Left lung (tissue), 14 donors: ENCODE measurements at regions of chr13 and their contacts with region 1.

Region 1: DNA sequence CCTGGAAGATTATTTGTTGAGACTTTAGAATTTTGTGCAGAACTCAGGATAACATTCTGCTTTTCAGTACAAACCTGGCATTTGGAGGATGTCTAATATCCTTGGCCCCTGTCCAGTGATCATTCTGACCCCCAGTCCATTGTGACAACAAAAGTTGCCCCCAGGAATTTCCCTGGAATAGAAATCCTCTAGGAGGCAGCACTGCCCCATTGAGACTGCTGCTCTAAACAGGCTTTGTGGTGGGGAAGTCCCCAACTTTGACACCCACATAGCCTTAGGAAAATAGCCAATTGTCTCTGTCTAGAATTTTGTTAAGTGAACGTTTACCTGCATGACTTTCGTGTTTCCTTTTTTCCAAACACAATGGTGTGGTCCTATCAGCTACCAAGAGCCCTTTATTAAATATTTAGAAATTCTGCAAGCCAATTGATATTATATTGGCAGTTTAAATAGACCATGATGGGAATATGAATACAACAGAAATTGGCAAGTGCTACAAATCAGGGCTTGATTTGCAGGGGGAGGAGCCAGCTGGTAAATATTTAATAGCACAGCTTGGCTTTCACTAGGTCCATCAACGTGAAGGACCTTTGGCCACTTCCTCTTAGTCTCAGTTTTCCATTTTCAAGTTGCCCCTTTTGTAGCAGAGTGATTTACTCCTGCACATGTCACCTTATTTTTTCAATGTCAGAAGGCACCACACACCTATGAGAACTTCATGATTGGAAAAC is 451.7 kb downstream of the EFNB2 start:
- DNase-seq: no peak
- ATAC-seq: peak; percentile 96
- H3K4me3 ChIP-seq: no peak overlapping the region
- H3K27ac ChIP-seq: no peak overlapping the region
- H3K4me1 ChIP-seq: no peaks in the 10 kb centered on the region
- H3K27me3 ChIP-seq: no peaks in the 10 kb centered on the region
- CTCF ChIP-seq: peak; percentile 47 to 54

Region 2: DNA sequence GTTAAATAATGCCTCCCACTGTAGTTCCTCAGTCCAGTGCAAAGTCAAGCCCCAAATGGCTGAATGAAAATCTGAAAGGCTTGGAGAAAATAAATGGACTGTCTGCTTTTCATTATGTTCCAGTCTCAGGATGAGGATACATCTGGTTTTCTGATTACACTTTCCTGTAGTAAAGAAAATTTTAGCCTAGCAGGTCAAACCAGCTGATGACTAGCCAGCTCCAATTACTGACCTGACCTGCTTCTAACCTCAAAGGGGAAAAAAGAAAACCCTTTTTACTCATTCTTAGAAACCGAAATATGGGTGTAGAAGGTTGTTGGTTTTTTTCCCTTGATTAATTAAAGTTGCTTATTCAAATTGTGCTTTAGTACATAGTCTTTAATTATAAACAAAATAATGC is 33.2 kb after region 1 on chr13:
- intact Hi-C with region 1: no loop called
- DNase-seq: peak in 1 of 4 donors; percentile 7
- ATAC-seq: no peak
- H3K4me3 ChIP-seq: no peak overlapping the region
- H3K27ac ChIP-seq: no peak overlapping the region
- H3K4me1 ChIP-seq: no peaks in the 10 kb centered on the region
- H3K27me3 ChIP-seq: no peaks in the 10 kb centered on the region
- CTCF ChIP-seq: no peak

Region 3: DNA sequence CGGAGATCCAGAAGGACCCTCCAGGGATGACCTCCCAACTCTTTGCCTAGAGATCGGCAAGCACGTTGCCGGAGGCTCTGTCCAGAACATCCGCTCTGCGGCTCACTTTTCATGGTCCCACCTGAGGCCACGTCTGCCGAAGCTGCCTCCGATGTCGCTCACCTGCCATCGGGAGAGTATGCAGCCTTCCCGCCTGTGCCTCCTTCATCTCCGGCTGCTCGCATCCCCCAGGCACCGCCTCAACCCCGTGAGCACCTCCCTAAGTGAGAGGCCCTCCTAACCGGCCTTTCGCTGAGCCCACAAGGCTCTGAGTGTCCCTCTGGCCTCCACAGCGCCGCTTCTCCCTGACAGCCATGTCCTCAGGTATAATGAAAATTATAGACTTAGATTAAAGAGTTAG is 176.6 kb after region 1 on chr13:
- intact Hi-C with region 1: no loop called
- DNase-seq: peak in 1 of 4 donors; percentile 67
- ATAC-seq: no peak
- H3K4me3 ChIP-seq: no peak overlapping the region
- H3K27ac ChIP-seq: no peak overlapping the region
- H3K4me1 ChIP-seq: no peaks in the 10 kb centered on the region
- H3K27me3 ChIP-seq: no peaks in the 10 kb centered on the region
- CTCF ChIP-seq: no peak

Region 4: DNA sequence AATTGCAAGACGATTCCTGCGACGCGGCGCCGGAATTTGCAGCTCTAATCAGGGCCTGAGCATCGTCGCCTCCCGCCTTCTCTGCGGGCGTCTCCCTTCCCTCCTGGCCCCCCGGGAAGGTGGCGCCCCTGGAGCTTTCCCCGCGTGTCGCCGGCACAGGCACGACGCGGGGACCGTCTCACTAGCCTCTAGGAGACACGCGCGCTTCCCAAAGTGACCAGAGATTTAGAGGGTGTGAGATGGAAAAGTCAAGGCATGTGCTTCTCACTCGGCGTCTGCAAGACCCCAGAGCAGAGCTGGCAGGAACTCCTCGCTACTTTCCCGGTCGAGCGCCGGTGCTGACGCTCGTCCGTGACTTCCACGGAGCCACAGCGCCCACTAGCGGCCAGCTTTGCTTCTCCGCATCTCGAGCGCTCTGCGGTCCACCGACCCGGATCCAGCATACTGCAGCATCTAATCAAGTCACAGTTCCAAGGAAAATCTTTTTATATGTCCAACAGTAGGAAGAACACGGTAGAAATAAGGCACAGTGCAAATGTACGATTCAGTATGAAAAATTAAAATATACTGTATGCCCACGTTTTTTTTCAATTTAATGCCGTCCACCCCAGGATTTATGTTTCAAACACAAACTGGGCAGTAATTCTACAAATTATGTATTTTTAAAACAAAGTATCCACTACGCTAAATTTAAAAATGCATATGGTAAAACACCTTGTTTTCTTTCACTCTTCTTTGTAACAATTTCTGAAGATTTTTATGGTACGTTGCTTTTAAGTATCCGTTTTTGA is 452.7 kb after region 1 on chr13:
- intact Hi-C with region 1: loop called in 1 of 2 experiments (anchors 10 kb)
- DNase-seq: peak; percentile 91 to 99 (median 94)
- ATAC-seq: peak; percentile 70
- H3K4me3 ChIP-seq: peak overlapping the region; percentile 65 to 70
- H3K27ac ChIP-seq: peak overlapping the region; percentile 62 to 68
- H3K4me1 ChIP-seq: peaks cover 0 to 30% of the 10 kb centered on the region in 2 donors
- H3K27me3 ChIP-seq: peaks cover 0 to 40% of the 10 kb centered on the region in 2 donors
- CTCF ChIP-seq: peak; percentile 87 to 96